CD14-positive monocyte (primary cell): ENCODE measurements at regions of chr1 and their contacts with region 1.

Region 1: DNA sequence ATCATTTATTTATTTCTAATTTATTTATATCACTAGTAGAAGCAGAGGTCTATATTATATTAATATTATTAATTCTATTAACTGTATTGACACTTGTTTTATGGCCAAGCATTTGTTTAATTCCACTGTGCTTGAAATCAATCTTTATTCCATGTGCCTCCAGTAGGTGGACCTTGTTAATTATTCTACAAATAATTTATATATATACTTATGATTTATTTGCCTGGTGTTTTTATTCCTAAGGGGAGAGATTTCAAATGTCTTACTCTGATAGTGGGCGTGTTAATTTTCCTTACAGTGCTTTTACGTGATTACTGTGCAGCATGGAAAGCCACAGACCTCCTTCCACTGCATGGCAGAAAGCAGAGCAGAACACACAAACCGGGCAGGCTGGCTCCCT is 17.5 kb upstream of the OR6N2 start:
- DNase-seq: no peak
- H3K4me3 ChIP-seq: peak overlapping the region in 1 of 3 experiments; percentile 65
- H3K4me3 Mint-ChIP-seq: peak overlapping the region in 1 of 2 donors; percentile 28
- H3K27ac ChIP-seq: peak overlapping the region; percentile 7 to 87
- H3K27ac Mint-ChIP-seq: peak overlapping the region; percentile 33 to 98 (median 77)
- H3K4me1 ChIP-seq: peaks cover 90 to 96% of the 10 kb centered on the region in 2 donors
- H3K4me1 Mint-ChIP-seq: peaks cover 92% of the 10 kb centered on the region
- H3K27me3 ChIP-seq: no peaks in the 10 kb centered on the region
- H3K27me3 Mint-ChIP-seq: peaks cover 0 to 3% (median 0%) of the 10 kb centered on the region in 3 donors
- CTCF ChIP-seq: peak; percentile 66

Region 2: GRCh38 chr1:158654571-158654970 is 144.0 kb before region 1 on chr1:
- intact Hi-C with region 1: no loop called
- DNase-seq: peak; percentile 41 to 83 (median 76)
- H3K4me3 ChIP-seq: peak overlapping the region in 2 of 3 experiments; percentile 19 to 47
- H3K4me3 Mint-ChIP-seq: peak overlapping the region; percentile 6 to 73
- H3K27ac ChIP-seq: no peak overlapping the region
- H3K27ac Mint-ChIP-seq: peak overlapping the region; percentile 12 to 79 (median 46)
- H3K4me1 ChIP-seq: peaks cover 15 to 20% of the 10 kb centered on the region in 2 donors
- H3K4me1 Mint-ChIP-seq: peaks cover 31% of the 10 kb centered on the region
- H3K27me3 ChIP-seq: no peaks in the 10 kb centered on the region
- H3K27me3 Mint-ChIP-seq: peaks cover 0 to 1% (median 0%) of the 10 kb centered on the region in 3 donors
- CTCF ChIP-seq: no peak

Region 3: GRCh38 chr1:158840236-158840635 is 41.7 kb after region 1 on chr1:
- intact Hi-C with region 1: loop called (anchors 5 kb)
- DNase-seq: peak in 1 of 3 donors; percentile 25
- H3K4me3 ChIP-seq: peak overlapping the region; percentile 16 to 100 (median 92)
- H3K4me3 Mint-ChIP-seq: peak overlapping the region; percentile 48 to 82
- H3K27ac ChIP-seq: peak overlapping the region in 1 of 2 donors; percentile 69
- H3K27ac Mint-ChIP-seq: peak overlapping the region; percentile 64 to 88 (median 71)
- H3K4me1 ChIP-seq: peaks cover 44 to 69% of the 10 kb centered on the region in 2 donors
- H3K4me1 Mint-ChIP-seq: peaks cover 68% of the 10 kb centered on the region
- H3K27me3 ChIP-seq: no peaks in the 10 kb centered on the region
- H3K27me3 Mint-ChIP-seq: no peaks in the 10 kb centered on the region
- CTCF ChIP-seq: no peak

Region 4: DNA sequence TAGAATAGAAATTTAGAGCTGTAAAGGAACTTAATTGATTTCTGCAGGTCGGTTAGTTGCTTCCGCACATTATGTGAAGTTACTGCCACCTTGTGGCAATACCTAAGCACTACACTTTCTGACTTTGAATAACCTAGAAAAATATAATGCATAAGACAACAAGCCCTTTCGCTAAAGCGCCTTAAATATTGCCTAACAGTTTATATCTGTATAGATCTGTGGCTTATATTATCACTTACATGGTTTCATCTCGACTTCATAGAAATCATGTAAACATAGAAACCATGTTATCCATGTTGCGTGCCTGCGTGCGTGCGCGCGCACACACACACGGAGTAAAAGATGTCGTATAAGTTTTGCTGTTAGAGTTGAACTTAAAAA is 200.2 kb after region 1 on chr1:
- intact Hi-C with region 1: loop called in 1 of 2 experiments (anchors 5 kb)
- DNase-seq: peak; percentile 47 to 72 (median 55)
- H3K4me3 ChIP-seq: peak overlapping the region in 2 of 3 experiments; percentile 9 to 60
- H3K4me3 Mint-ChIP-seq: peak overlapping the region in 1 of 2 donors; percentile 81
- H3K27ac ChIP-seq: no peak overlapping the region
- H3K27ac Mint-ChIP-seq: no peak overlapping the region
- H3K4me1 ChIP-seq: peaks cover 4 to 9% of the 10 kb centered on the region in 2 donors
- H3K4me1 Mint-ChIP-seq: peaks cover 13% of the 10 kb centered on the region
- H3K27me3 ChIP-seq: no peaks in the 10 kb centered on the region
- H3K27me3 Mint-ChIP-seq: peaks cover 0 to 2% (median 0%) of the 10 kb centered on the region in 3 donors
- CTCF ChIP-seq: peak; percentile 93